Ovary (tissue), 10 donors: ENCODE measurements at regions of chr9 and their contacts with region 1.

Region 1: DNA sequence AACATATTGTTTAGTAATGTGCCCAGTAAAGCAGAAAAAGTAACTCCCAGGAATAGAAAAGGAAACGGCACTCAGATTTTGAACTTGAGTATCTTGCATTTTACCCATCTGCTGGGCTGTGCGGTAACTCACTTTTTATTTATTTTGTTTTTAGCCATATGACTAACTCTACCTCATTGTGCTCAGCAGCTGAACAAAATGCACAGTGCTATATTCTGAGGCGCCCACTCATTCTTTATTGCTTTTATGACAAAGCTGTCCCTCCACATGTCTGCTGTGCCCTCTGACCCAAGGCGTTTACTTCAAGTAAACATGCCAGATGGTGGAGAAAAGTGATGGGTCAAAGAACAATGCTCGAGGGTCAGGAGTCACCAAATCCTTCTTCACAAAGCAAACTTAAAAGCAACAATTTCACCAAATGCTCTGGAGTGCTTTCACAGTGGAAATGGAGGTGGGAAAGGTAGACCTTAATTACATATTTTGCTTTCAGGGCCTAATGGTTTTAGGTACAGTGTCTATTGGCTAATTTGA is 215.2 kb upstream of the ELAVL2 start:
- DNase-seq: no peak
- H3K4me3 ChIP-seq: no peak overlapping the region
- H3K27ac ChIP-seq: no peak overlapping the region
- H3K4me1 ChIP-seq: no peaks in the 10 kb centered on the region
- H3K27me3 ChIP-seq: no peaks in the 10 kb centered on the region
- CTCF ChIP-seq: no peak
- EP300 ChIP-seq: no peak
- POLR2A ChIP-seq: no peak

Region 2: GRCh38 chr9:24011881-24012280 is 29.3 kb before region 1 on chr9:
- intact Hi-C with region 1: loop called in 1 of 4 experiments (anchors 2 kb)
- DNase-seq: no peak
- H3K4me3 ChIP-seq: no peak overlapping the region
- H3K27ac ChIP-seq: no peak overlapping the region
- H3K4me1 ChIP-seq: no peaks in the 10 kb centered on the region
- H3K27me3 ChIP-seq: no peaks in the 10 kb centered on the region
- CTCF ChIP-seq: no peak
- EP300 ChIP-seq: no peak
- POLR2A ChIP-seq: no peak